ENCODE measurements at regions of chr2 and their contacts with region 1.

Region 1: DNA sequence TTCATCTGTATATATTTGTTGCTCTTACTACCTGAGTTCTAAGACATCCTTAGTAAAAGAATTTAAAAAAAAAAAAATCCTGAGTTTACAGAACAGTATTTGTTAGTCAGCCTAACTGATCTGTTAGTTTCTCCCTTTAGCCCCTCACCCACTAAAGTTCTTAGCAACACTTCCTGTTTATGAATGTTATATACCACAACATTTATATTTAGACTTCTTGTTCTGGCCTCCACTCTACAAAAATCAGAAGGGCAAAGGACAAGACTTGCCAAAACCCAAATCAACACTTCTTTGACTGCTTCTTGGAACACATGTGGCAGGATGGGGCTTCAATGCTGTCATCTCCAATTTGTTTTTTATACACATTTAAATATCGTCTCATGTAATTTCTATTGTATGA is 71.1 kb downstream of the MGAT5 start:
- DNase-seq: no peak
- ATAC-seq: peak; percentile 65
- H3K4me3 ChIP-seq: no peak overlapping the region
- H3K4me3 Mint-ChIP-seq: peak overlapping the region in 2 of 10 donors; percentile 11 to 57
- H3K27ac ChIP-seq: no peak overlapping the region
- H3K27ac Mint-ChIP-seq: peak overlapping the region in 3 of 9 donors; percentile 45 to 59 (median 46)
- H3K4me1 ChIP-seq: peaks cover 19 to 29% of the 10 kb centered on the region in 2 donors
- H3K4me1 Mint-ChIP-seq: peaks cover 59 to 73% (median 66%) of the 10 kb centered on the region in 7 donors
- H3K27me3 ChIP-seq: no peaks in the 10 kb centered on the region
- H3K27me3 Mint-ChIP-seq: no peaks in the 10 kb centered on the region

Region 2: GRCh38 chr2:134301099-134301927 is 23.6 kb before region 1 on chr2:
- CTCF ChIA-PET with region 1: no interaction called
- POLR2A ChIA-PET with region 1: no interaction called
- intact Hi-C with region 1: loop called in 1 of 2 experiments (anchors 2 kb)
- DNase-seq: no peak
- ATAC-seq: no peak
- H3K4me3 ChIP-seq: no peak overlapping the region
- H3K4me3 Mint-ChIP-seq: no peak overlapping the region
- H3K27ac ChIP-seq: no peak overlapping the region
- H3K27ac Mint-ChIP-seq: peak overlapping the region in 3 of 9 donors; percentile 42 to 68 (median 52)
- H3K4me1 ChIP-seq: peaks cover 4 to 13% of the 10 kb centered on the region in 2 donors
- H3K4me1 Mint-ChIP-seq: peaks cover 24 to 72% (median 64%) of the 10 kb centered on the region in 7 donors
- H3K27me3 ChIP-seq: no peaks in the 10 kb centered on the region
- H3K27me3 Mint-ChIP-seq: peaks cover 0 to 2% (median 0%) of the 10 kb centered on the region in 5 donors